Posterior vena cava (tissue), 2 donors: ENCODE measurements at regions of chr1 and their contacts with region 1.

Region 1: DNA sequence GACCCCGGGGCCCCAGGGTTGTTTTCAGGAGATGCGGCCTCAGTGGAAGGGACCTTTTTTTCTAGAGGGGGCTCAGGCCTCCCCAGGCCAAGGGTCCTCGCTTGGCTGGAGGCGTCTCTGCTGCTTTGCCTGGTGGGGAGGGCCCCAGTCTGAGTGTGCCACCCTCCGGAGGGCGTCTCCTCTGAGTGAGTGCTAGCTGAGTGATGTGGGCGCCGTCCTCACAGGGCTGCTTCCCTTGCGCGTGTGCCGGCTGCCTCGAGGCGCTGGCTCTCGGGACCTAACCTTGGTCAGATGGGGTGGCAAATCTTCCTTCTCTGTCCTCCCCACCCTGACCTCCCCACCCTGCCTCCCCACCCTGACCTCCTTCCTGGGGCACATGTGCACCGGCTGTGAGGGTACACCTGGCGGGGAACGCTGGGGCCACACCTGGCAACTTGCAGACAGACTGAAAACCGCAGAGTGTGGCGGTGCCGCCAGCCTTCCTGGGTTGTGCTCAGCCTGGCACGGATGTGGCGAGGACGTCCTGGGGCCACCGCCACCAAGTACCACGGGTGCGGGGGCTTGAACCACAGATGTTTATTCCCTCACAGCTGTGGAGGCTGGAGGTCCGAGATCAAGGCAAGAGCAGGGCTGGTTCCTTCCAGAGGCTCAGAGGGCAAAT is 93.0 kb upstream of the TTC34 start:
- DNase-seq: no peak

Region 2: GRCh38 chr1:2966449-2967328 is 72.2 kb after region 1 on chr1:
- intact Hi-C with region 1: no loop called
- DNase-seq: peak; percentile 57

Region 3: DNA sequence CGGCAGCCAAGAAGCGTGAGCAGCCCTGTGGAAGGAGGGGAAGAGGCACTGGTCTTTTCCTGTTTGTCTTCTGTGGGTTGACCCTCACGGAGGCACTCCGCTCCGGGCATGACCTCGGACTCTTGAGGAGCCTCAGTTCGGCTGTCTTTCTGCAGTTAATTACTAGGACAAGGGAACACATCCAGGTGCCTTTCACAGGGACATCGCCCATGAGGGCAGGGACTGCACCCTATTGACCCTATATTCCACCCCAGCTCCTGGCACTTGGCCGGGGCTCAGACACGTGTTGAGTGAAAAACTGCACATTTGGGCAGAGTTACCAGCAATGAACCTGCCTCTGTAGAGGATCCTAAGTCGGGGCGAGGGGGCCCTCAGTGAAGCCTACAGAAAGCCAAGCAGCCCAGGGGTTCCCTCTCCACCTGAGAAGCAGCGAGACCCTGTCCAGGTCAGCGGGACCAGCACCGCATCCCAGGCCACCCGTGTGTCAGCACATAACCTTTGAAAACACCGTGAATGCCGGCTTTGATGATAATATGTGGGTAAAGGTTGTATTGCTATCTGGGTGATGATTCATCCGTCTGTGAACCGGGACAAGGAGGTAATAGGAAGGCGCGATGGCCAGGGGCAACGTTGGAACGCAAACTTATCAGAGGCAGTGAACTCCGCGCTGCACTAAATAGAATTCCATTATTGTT is 398.5 kb after region 1 on chr1:
- intact Hi-C with region 1: loop called in 1 of 2 experiments (anchors 10 kb)
- DNase-seq: no peak